Ovary (tissue), 10 donors: ENCODE measurements at regions of chr1 and their contacts with region 1.

Region 1: GRCh38 chr1:232988572-232989040 is 38.2 kb downstream of the NTPCR start:
- DNase-seq: no peak
- H3K4me3 ChIP-seq: no peak overlapping the region
- H3K27ac ChIP-seq: no peak overlapping the region
- H3K4me1 ChIP-seq: no peaks in the 10 kb centered on the region
- H3K27me3 ChIP-seq: no peaks in the 10 kb centered on the region
- CTCF ChIP-seq: no peak
- EP300 ChIP-seq: no peak
- POLR2A ChIP-seq: no peak

Region 2: DNA sequence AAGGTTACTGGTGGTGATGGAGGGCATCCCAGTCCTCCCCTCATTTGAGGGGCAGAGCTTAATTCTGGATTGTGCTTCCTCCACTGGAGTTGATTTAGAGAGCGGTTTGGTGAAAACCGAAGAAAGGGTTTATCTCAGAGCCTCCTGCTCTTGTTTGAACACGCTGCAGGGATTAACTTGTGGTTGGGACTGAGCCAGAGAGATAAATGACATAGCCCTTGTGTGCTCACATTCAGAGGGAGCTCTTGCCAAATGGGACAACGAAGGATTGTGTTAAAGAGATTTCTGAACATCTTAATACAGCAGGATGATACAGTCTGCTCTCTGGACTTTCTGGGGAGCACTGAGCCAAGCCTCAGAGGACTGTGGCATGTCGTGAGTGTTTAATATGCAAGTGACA is 1053.8 kb before region 1 on chr1:
- intact Hi-C with region 1: no loop called
- DNase-seq: no peak
- H3K4me3 ChIP-seq: no peak overlapping the region
- H3K27ac ChIP-seq: no peak overlapping the region
- H3K4me1 ChIP-seq: peaks cover 8% of the 10 kb centered on the region
- H3K27me3 ChIP-seq: no peaks in the 10 kb centered on the region
- CTCF ChIP-seq: no peak
- EP300 ChIP-seq: no peak
- POLR2A ChIP-seq: no peak

Region 3: GRCh38 chr1:232834066-232834465 is 154.5 kb before region 1 on chr1:
- intact Hi-C with region 1: no loop called
- DNase-seq: no peak
- H3K4me3 ChIP-seq: no peak overlapping the region
- H3K27ac ChIP-seq: no peak overlapping the region
- H3K4me1 ChIP-seq: no peaks in the 10 kb centered on the region
- H3K27me3 ChIP-seq: no peaks in the 10 kb centered on the region
- CTCF ChIP-seq: no peak
- EP300 ChIP-seq: no peak
- POLR2A ChIP-seq: no peak

Region 4: GRCh38 chr1:232962771-232963745 is 25.5 kb before region 1 on chr1:
- intact Hi-C with region 1: loop called in 1 of 4 experiments (anchors 1 kb)
- DNase-seq: no peak
- H3K4me3 ChIP-seq: no peak overlapping the region
- H3K27ac ChIP-seq: peak overlapping the region in 1 of 2 donors; percentile 42
- H3K4me1 ChIP-seq: no peaks in the 10 kb centered on the region
- H3K27me3 ChIP-seq: no peaks in the 10 kb centered on the region
- CTCF ChIP-seq: no peak
- EP300 ChIP-seq: no peak
- POLR2A ChIP-seq: no peak